MCF 10A (cell line): ENCODE measurements at regions of chr4 and their contacts with region 1.

Region 1: DNA sequence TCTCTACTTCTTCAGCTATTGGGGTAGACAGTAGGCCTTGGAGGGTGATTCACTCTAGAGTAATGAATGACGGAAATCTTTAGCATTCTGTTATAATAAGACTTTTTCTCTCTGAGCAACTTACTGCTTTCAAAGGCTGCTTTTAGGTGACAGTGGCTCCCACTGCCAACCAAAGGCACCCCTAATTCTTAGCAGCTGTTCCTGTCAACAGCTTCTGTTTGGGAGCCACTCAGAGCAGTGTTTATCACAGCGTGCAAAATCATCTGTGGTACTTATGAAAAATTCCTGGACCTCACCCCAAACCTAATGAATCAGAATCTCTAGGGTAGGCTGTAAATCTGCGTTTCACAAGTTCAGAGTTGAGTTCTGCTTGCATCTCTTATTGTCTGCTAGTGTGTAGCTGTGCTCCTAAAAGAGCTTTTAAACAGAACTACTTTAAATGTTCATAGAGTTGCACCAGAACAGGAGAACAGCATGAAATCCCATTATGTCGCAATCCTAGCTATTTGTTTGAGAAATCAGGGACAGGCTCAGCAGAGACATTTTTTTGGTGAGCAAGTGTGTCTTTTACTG is 52.8 kb upstream of the POU4F2 start:
- DNase-seq: peak; percentile 80
- H3K4me3 Mint-ChIP-seq: no peak overlapping the region
- H3K27ac Mint-ChIP-seq: peak overlapping the region; percentile 78
- H3K4me1 Mint-ChIP-seq: peaks cover 15% of the 10 kb centered on the region
- H3K27me3 Mint-ChIP-seq: no peaks in the 10 kb centered on the region
- CTCF ChIP-seq: no peak

Region 2: GRCh38 chr4:146567396-146567795 is 18.5 kb before region 1 on chr4:
- CTCF ChIA-PET with region 1: no interaction called
- POLR2A ChIA-PET with region 1: interaction called, 10 read pairs
- intact Hi-C with region 1: no loop called
- DNase-seq: peak; percentile 82
- H3K4me3 Mint-ChIP-seq: no peak overlapping the region
- H3K27ac Mint-ChIP-seq: peak overlapping the region; percentile 62
- H3K4me1 Mint-ChIP-seq: peaks cover 12% of the 10 kb centered on the region
- H3K27me3 Mint-ChIP-seq: no peaks in the 10 kb centered on the region
- CTCF ChIP-seq: no peak

Region 3: GRCh38 chr4:148090503-148091476 is 1504.9 kb after region 1 on chr4:
- CTCF ChIA-PET with region 1: no interaction called
- POLR2A ChIA-PET with region 1: no interaction called
- intact Hi-C with region 1: no loop called
- DNase-seq: no peak
- H3K4me3 Mint-ChIP-seq: no peak overlapping the region
- H3K27ac Mint-ChIP-seq: no peak overlapping the region
- H3K4me1 Mint-ChIP-seq: no peaks in the 10 kb centered on the region
- H3K27me3 Mint-ChIP-seq: no peaks in the 10 kb centered on the region
- CTCF ChIP-seq: no peak